ENCODE measurements at regions of chr16 and their contacts with region 1.

Region 1: DNA sequence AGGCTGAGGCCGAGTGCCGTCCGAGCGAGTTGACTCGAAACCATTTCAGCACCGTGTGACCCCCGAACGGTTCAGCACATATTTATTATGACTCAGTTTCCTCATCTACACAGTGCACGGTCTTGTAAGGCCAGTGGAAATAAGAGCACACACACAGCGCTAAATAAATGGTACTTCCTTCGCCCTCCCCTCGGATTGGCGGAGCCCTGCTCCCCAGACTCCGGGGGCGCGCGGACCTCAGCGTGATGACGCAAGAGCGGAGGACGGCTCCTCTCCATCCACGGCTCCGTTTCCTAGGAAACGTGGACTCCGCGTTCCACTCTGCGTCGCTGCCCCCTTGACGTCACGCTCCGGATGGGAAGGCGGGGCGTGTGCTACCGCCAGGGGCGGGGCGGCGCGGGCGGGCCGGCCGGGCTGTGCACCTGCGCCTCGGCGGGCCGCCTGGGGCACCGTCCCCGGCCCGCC is at the start of gene PARD6A:
- DNase-seq: peak; percentile 98
- ATAC-seq: peak; percentile 83
- H3K4me3 Mint-ChIP-seq: peak within 1 kb of the TSS; percentile 90
- H3K27ac Mint-ChIP-seq: peak within 1 kb of the TSS; percentile 91
- H3K4me1 Mint-ChIP-seq: peaks cover 21% of the 10 kb centered on the region
- H3K27me3 Mint-ChIP-seq: no peaks in the 10 kb centered on the region
- total RNA-seq, gene PARD6A: 7.8 to 8.7 TPM

Region 2: DNA sequence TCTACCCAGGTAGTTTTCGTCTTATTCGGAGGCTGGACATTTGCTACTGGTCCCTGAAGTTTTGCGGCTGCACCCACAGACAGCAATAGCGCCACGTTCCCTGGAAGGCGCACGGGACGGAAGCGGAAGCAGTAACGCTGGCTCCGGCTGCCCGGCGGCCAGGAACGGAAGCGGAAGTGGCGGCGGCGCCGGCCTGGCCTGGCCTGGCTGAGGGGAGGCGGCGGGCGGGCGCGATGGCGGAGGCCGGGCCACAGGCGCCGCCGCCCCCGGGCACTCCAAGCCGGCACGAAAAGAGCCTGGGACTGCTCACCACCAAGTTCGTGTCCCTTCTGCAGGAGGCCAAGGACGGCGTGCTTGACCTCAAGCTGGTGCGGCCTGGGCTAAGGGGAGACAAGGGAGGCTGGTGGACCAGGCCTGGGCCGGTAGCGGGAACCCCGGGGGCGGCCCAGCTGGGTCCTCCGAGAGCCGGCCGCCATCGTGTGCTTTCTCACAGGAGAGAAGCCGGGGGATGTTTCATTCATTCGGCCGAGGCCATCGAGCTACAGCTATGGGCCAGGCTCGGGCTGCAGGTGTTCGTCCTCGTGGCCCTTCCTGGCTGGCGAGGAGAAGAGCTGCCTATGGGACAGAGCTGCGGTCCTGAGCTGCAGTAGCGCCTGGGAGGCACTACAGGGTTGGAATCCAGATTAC is 468.5 kb before region 1 on chr16 and contains the start of gene E2F4:
- CTCF ChIA-PET with region 1: interaction called, 3 read pairs
- POLR2A ChIA-PET with region 1: no interaction called
- intact Hi-C with region 1: loop called in 1 of 2 experiments (anchors 1 kb)
- DNase-seq: peak; percentile 92
- ATAC-seq: peak; percentile 96
- H3K4me3 Mint-ChIP-seq: peak within 1 kb of the TSS; percentile 93
- H3K27ac Mint-ChIP-seq: peak within 1 kb of the TSS; percentile 93
- H3K4me1 Mint-ChIP-seq: peaks cover 32% of the 10 kb centered on the region
- H3K27me3 Mint-ChIP-seq: no peaks in the 10 kb centered on the region
- total RNA-seq, gene E2F4: 91.4 to 110 TPM

Region 3: DNA sequence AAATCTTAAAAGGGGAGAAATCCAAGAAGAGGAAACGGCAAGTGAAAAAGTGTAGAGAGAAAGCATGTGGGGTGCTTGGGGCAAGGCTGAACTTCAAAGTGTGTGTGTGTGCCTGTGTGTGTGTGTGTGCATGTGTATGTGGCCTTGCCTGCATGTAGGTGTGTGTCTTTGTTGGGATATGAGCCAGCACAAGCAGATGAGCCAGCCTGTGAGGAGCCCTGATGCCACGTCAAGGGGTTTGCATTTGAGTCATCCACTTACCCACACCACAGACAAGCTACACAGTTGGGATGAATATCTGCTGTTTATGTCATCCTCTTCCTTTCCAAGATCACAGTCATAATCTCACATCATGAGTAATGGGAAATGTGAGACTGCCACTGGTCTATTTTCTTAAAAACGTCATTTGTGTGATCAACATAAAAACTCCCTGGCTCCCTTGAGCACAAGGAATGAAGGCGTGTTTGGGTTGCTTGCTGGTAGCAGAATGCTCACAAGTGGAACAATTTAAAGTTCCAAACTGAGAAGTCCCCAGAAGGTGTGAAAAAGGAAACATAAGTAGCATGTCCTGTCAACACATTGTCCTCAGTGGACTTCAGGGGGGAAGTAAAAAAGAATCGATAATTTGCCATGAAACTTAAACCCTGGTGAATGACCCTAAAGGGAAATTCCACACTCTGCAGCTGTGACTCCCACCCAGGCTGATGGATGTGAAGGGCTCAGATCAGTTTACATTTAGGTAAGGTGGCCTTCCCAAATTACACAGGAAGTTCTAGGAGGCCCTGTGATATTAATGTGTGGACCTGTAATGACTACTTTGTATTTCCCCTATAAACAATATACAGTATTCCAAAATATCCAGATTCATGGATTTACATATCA is 348.7 kb before region 1 on chr16:
- CTCF ChIA-PET with region 1: no interaction called
- POLR2A ChIA-PET with region 1: no interaction called
- intact Hi-C with region 1: loop called in 1 of 2 experiments (anchors 1 kb)
- DNase-seq: peak; percentile 94
- ATAC-seq: peak; percentile 98
- H3K4me3 Mint-ChIP-seq: peak overlapping the region; percentile 1
- H3K27ac Mint-ChIP-seq: peak overlapping the region; percentile 98
- H3K4me1 Mint-ChIP-seq: peaks cover 40% of the 10 kb centered on the region
- H3K27me3 Mint-ChIP-seq: peaks cover 1% of the 10 kb centered on the region

Region 4: DNA sequence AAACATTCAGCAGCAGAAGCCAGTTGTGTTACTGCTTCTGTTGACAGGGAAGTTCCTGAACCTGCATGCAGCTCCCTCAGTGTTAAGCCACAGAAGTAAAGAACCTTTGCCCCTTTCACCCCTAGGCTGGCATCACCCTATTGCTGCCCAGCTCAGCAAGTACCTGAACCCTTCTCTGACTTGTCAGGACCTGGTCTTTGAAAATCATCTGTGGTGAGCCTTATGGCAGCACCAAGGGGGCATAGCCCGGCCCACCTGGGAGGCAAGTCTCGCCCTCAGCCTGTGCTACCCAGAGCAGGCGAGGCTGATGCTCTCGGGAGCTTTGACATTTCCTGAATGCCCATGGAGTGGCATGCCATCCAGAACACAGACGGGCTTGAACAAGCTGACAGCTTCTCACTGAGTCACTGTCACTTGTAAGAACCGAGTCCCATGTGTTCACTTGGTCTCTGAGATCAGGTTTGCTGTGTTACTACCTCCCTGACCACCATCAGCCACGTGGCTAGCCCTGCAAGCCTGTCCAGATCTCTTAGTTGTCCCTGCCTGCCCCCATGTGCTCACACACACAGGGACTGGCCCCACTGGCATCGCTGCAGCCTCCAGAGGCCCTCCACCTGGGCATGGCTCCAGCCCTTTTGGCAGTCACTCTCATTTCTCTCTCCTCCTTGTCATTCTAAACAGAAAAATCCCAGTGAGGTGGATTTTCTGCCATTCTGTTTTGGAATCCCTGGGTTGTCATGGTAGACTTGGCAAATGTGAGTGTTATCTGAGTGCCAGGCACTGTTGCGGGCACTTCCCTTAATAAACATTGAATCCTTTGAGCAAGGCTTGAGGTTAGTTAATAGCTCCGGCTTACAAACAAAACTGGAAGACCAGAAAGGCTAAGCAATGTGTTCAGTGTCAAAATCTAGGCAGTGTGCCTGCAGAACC is 18.6 kb before region 1 on chr16:
- CTCF ChIA-PET with region 1: interaction called, 77 read pairs
- POLR2A ChIA-PET with region 1: interaction called, 7 read pairs
- intact Hi-C with region 1: loop called (anchors 1 to 2 kb)
- DNase-seq: no peak
- ATAC-seq: no peak
- H3K4me3 Mint-ChIP-seq: no peak overlapping the region
- H3K27ac Mint-ChIP-seq: no peak overlapping the region
- H3K4me1 Mint-ChIP-seq: peaks cover 12% of the 10 kb centered on the region
- H3K27me3 Mint-ChIP-seq: no peaks in the 10 kb centered on the region

Region 5: DNA sequence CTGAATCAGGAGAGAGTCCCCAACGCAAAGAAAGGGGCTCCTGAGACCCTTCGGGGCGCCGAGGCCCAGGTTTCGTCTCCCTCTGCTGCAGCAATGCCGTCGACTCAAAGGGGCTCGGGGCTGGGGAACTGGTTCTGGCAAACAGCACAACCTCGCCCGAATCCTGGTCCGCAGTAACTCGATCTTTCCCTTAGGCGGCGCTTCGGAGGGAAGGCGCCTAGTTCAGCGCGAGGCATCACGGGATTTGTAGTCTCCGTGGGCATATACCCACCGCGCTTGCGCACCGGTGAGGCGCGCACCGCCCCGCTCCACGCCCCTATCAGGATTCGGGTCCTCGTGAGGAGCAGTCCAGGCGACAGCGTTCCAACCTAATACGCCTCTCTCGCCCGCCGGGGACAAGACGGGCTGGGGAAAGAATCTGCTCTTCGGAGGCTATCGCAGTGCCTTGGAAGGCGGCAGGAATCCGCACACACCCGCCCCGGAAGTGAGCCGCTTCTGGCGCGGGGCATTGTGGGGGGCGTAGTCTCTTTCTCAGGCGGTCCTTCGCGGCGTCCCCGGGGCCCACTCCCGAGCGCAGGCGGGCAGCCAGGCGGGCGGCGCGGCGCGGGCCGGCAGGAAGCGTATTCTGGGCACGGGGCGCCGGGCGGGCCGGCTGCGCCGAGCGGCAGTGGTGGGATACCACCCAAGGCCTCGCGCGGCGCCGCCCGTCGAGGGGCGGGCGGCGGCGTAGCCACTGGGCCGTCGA is 181.3 kb after region 1 on chr16 and contains the start of gene THAP11:
- CTCF ChIA-PET with region 1: no interaction called
- POLR2A ChIA-PET with region 1: interaction called, 4 read pairs
- intact Hi-C with region 1: loop called in 1 of 2 experiments (anchors 1 kb)
- DNase-seq: peak; percentile 97
- ATAC-seq: peak; percentile 55
- H3K4me3 Mint-ChIP-seq: peak within 1 kb of the TSS; percentile 94
- H3K27ac Mint-ChIP-seq: peak within 1 kb of the TSS; percentile 97
- H3K4me1 Mint-ChIP-seq: peaks cover 33% of the 10 kb centered on the region
- H3K27me3 Mint-ChIP-seq: no peaks in the 10 kb centered on the region
- total RNA-seq, gene THAP11: 31.8 to 34.5 TPM

Region 6: GRCh38 chr16:69186642-69187445 is 1526.2 kb after region 1 on chr16 and contains the start of gene SNTB2:
- CTCF ChIA-PET with region 1: no interaction called
- POLR2A ChIA-PET with region 1: no interaction called
- intact Hi-C with region 1: loop called in 1 of 2 experiments (anchors 5 kb)
- DNase-seq: peak; percentile 91
- ATAC-seq: peak; percentile 83
- H3K4me3 Mint-ChIP-seq: peak within 1 kb of the TSS; percentile 83
- H3K27ac Mint-ChIP-seq: peak within 1 kb of the TSS; percentile 96
- H3K4me1 Mint-ChIP-seq: peaks cover 50% of the 10 kb centered on the region
- H3K27me3 Mint-ChIP-seq: no peaks in the 10 kb centered on the region
- total RNA-seq, gene SNTB2: 15.7 to 17.2 TPM